ENCODE measurements at regions of chr2 and their contacts with region 1.

Region 1: DNA sequence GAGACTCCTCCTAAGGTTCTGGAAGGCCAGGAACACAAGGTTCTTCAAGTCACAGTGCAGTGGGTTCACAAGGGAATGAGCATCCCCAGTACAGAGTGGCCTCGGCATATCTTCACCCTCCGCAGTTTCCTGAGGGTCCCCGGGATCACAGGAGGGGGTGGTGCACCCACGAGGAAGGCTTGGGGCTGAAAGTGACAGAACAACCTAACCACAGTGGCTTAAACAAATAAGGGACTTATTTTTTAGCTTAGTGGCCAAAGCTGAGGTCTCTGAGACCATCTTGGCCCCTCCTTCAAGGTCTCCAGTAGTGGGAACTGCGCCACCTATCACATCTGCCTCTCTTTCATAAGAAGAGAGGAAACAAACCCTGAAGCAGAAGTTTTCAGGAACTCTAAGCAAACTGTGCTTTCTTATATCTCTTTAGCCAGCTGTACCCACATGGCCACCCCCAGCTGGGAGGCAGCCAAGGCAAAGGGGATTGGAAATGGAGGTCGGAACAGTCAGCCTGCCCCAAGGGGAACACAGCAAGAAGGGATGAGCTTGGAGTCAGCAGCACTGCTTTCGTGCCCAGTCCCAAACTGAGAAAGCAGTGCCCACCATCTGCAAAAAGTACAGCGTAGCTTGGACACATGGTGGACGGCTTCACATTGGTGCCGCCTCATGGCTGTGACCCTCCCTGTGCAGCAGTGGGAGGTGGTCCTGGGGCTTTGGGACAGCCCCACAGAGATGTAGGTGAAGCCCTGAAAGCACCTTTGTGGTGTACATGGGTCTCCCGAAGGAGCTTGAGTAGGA is 260.0 kb upstream of the ID2 start:
- DNase-seq: no peak
- ATAC-seq: peak in 1 of 3 donors; percentile 37
- H3K4me3 ChIP-seq: peak overlapping the region; percentile 6
- H3K4me3 Mint-ChIP-seq: peak overlapping the region; percentile 90
- H3K27ac ChIP-seq: peak overlapping the region; percentile 41
- H3K27ac Mint-ChIP-seq: peak overlapping the region; percentile 85 to 95
- H3K4me1 ChIP-seq: peaks cover 65% of the 10 kb centered on the region
- H3K4me1 Mint-ChIP-seq: peaks cover 82 to 91% of the 10 kb centered on the region in 2 donors
- H3K27me3 ChIP-seq: no peaks in the 10 kb centered on the region
- H3K27me3 Mint-ChIP-seq: no peaks in the 10 kb centered on the region
- CTCF ChIP-seq: no peak

Region 2: GRCh38 chr2:7748717-7749415 is 673.0 kb before region 1 on chr2:
- intact Hi-C with region 1: loop called (anchors 10 kb)
- DNase-seq: peak in 1 of 2 donors; percentile 69
- ATAC-seq: peak; percentile 50 to 61 (median 53)
- H3K4me3 ChIP-seq: no peak overlapping the region
- H3K4me3 Mint-ChIP-seq: peak overlapping the region; percentile 67
- H3K27ac ChIP-seq: peak overlapping the region; percentile 85
- H3K27ac Mint-ChIP-seq: peak overlapping the region; percentile 44 to 79
- H3K4me1 ChIP-seq: peaks cover 38% of the 10 kb centered on the region
- H3K4me1 Mint-ChIP-seq: peaks cover 37 to 42% of the 10 kb centered on the region in 2 donors
- H3K27me3 ChIP-seq: no peaks in the 10 kb centered on the region
- H3K27me3 Mint-ChIP-seq: no peaks in the 10 kb centered on the region
- CTCF ChIP-seq: no peak

Region 3: DNA sequence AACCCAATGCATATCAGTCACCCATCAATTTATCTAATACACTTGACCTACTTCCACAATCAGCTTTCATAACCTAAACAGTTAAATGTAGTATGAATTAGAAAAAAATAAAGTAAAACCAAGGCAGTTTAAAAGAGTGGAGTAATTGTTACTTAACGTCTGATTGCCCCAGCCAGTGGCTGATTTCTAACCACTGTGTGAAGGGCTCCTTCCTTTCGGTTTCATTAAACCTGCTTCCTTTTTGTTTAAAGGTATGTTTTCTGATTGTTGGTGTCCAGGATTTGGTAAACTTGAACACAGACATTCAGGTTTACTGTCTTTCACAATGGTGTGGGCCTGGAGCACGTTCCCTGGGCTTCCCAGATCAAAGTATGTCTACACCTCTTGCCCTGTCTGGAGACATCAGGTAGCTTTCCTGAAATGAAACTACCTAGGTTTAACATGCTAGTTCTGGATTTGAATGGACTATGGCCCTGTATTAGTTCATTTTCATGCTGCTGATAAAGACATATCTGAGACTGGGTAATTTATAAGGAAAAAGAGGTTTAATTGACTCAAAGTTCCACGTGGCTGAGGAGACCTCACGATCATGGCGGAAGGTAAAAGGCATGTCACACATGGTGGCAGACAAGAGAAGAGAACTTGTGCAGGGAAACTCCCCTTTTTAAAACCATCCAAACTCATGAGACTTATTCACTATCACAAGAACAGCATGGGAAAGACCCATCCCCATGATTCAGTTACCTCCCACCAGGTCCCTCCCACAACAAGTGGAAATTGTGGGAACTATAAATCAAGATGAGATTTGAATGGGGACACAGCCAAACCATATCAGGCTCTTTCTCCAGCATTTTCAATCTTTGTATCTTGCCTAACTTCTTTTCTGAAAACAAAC is 345.2 kb before region 1 on chr2:
- intact Hi-C with region 1: no loop called
- DNase-seq: peak; percentile 26 to 31
- ATAC-seq: peak; percentile 87 to 97 (median 87)
- H3K4me3 ChIP-seq: no peak overlapping the region
- H3K4me3 Mint-ChIP-seq: peak overlapping the region; percentile 57
- H3K27ac ChIP-seq: peak overlapping the region; percentile 40
- H3K27ac Mint-ChIP-seq: peak overlapping the region; percentile 73 to 80
- H3K4me1 ChIP-seq: peaks cover 20% of the 10 kb centered on the region
- H3K4me1 Mint-ChIP-seq: peaks cover 33% of the 10 kb centered on the region in 2 donors
- H3K27me3 ChIP-seq: no peaks in the 10 kb centered on the region
- H3K27me3 Mint-ChIP-seq: no peaks in the 10 kb centered on the region
- CTCF ChIP-seq: no peak

Region 4: DNA sequence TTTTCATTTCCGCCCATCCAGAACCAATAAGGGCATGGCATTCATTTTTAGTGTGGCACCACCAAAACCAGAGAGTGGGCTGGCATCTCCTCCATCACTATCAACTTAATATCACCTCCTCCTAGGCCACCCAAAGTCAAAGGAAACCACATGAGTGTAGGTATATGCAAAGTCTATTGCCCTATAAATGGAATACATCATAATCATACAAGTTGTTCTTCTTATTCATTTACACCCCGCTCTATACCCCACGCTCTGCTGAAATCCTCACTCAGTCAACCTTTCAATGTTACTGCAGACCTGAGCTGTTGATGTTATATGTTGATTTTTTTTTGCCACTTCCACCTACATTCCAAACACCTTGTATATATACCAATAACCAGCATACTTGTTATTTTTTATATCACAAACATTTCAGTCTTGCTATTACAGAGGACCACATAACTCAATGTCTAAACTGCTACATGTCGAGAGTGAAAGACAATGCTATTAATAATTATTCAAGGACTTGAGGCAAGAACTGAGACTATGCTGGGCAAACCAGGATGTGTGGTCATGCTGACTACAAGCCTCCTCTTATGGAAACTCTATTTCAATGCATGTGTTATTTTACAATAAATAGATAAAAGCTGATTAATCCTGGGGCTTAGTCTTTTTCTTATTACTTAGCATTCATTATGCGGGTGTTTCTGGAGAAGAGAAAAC is 206.5 kb before region 1 on chr2:
- intact Hi-C with region 1: no loop called
- DNase-seq: no peak
- ATAC-seq: no peak
- H3K4me3 ChIP-seq: no peak overlapping the region
- H3K4me3 Mint-ChIP-seq: no peak overlapping the region
- H3K27ac ChIP-seq: no peak overlapping the region
- H3K27ac Mint-ChIP-seq: peak overlapping the region in 1 of 2 donors; percentile 13
- H3K4me1 ChIP-seq: no peaks in the 10 kb centered on the region
- H3K4me1 Mint-ChIP-seq: peaks cover 26 to 42% of the 10 kb centered on the region in 2 donors
- H3K27me3 ChIP-seq: no peaks in the 10 kb centered on the region
- H3K27me3 Mint-ChIP-seq: no peaks in the 10 kb centered on the region
- CTCF ChIP-seq: no peak

Region 5: GRCh38 chr2:8380026-8380425 is 41.8 kb before region 1 on chr2:
- intact Hi-C with region 1: loop called (anchors 5 kb)
- DNase-seq: no peak
- ATAC-seq: peak in 2 of 3 donors; percentile 38 to 58
- H3K4me3 ChIP-seq: no peak overlapping the region
- H3K4me3 Mint-ChIP-seq: peak overlapping the region; percentile 65
- H3K27ac ChIP-seq: peak overlapping the region; percentile 8
- H3K27ac Mint-ChIP-seq: peak overlapping the region; percentile 81 to 84
- H3K4me1 ChIP-seq: peaks cover 40% of the 10 kb centered on the region
- H3K4me1 Mint-ChIP-seq: peaks cover 51 to 66% of the 10 kb centered on the region in 2 donors
- H3K27me3 ChIP-seq: no peaks in the 10 kb centered on the region
- H3K27me3 Mint-ChIP-seq: no peaks in the 10 kb centered on the region
- CTCF ChIP-seq: no peak

Region 6: GRCh38 chr2:8456151-8456845 is 34.4 kb after region 1 on chr2:
- intact Hi-C with region 1: loop called (anchors 2 kb)
- DNase-seq: peak; percentile 44 to 80
- ATAC-seq: peak; percentile 46 to 64 (median 51)
- H3K4me3 ChIP-seq: peak overlapping the region; percentile 19
- H3K4me3 Mint-ChIP-seq: peak overlapping the region; percentile 95
- H3K27ac ChIP-seq: peak overlapping the region; percentile 99
- H3K27ac Mint-ChIP-seq: peak overlapping the region; percentile 99 to 100
- H3K4me1 ChIP-seq: peaks cover 80% of the 10 kb centered on the region
- H3K4me1 Mint-ChIP-seq: peaks cover 80 to 85% of the 10 kb centered on the region in 2 donors
- H3K27me3 ChIP-seq: no peaks in the 10 kb centered on the region
- H3K27me3 Mint-ChIP-seq: no peaks in the 10 kb centered on the region
- CTCF ChIP-seq: no peak

Region 7: GRCh38 chr2:8544786-8545694 is 123.2 kb after region 1 on chr2:
- intact Hi-C with region 1: loop called (anchors 10 kb)
- DNase-seq: peak; percentile 71 to 88
- ATAC-seq: peak; percentile 67 to 78 (median 69)
- H3K4me3 ChIP-seq: no peak overlapping the region
- H3K4me3 Mint-ChIP-seq: peak overlapping the region; percentile 50
- H3K27ac ChIP-seq: peak overlapping the region; percentile 87
- H3K27ac Mint-ChIP-seq: peak overlapping the region; percentile 99
- H3K4me1 ChIP-seq: peaks cover 74% of the 10 kb centered on the region
- H3K4me1 Mint-ChIP-seq: peaks cover 73 to 82% of the 10 kb centered on the region in 2 donors
- H3K27me3 ChIP-seq: no peaks in the 10 kb centered on the region
- H3K27me3 Mint-ChIP-seq: no peaks in the 10 kb centered on the region
- CTCF ChIP-seq: peak; percentile 45

Measured in natural killer cell (primary cell).